ENCODE measurements at regions of chr2 and their contacts with region 1.

Region 1: GRCh38 chr2:181041661-181042060 is 61.3 kb downstream of the UBE2E3 start:
- DNase-seq: no peak
- H3K4me3 ChIP-seq: no peak overlapping the region
- H3K27ac ChIP-seq: no peak overlapping the region
- H3K4me1 ChIP-seq: 0 out of 2 replicates have a peak, but pooled peaks cover 3% of the 10 kb centered on the region
- H3K27me3 ChIP-seq: no peaks in the 10 kb centered on the region
- CTCF ChIP-seq: no peak

Region 2: GRCh38 chr2:181393472-181393871 is 351.8 kb after region 1 on chr2:
- CTCF ChIA-PET with region 1: no interaction called
- POLR2A ChIA-PET with region 1: no interaction called
- intact Hi-C with region 1: no loop called
- DNase-seq: peak; percentile 5 to 64
- H3K4me3 ChIP-seq: peak overlapping the region; percentile 49; the same call in 1 of the 2 replicates
- H3K27ac ChIP-seq: peak overlapping the region; percentile 18; the same call in 1 of the 2 replicates
- H3K4me1 ChIP-seq: peaks cover 9% of the 10 kb centered on the region; the same call in 1 of the 2 replicates
- H3K27me3 ChIP-seq: no peaks in the 10 kb centered on the region
- CTCF ChIP-seq: no peak

Region 3: DNA sequence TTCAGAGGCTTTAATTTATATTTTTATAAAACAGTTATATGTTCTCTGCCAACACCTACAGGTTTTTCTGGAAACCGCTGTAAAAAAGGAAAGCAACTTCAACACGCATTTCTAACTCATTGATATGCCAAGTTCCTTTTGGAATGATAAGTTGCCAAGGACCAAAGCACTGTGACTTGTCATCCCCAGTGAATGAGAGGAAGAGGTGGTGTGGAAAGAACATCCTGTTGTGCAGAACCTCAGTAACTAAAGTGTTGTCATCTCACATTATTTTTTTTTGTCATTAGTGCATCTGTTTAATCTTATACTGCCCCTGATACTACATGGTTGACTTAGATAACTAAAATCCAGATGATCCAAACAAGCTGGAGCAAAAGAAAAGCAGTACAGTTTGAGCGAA is 734.7 kb after region 1 on chr2:
- CTCF ChIA-PET with region 1: interaction called, 17 read pairs
- POLR2A ChIA-PET with region 1: no interaction called
- intact Hi-C with region 1: no loop called
- DNase-seq: no peak
- H3K4me3 ChIP-seq: no peak overlapping the region
- H3K27ac ChIP-seq: no peak overlapping the region
- H3K4me1 ChIP-seq: peaks cover 43% of the 10 kb centered on the region
- H3K27me3 ChIP-seq: no peaks in the 10 kb centered on the region
- CTCF ChIP-seq: no peak

Measured in PC-9 (cell line).